ENCODE measurements at regions of chr12 and their contacts with region 1.

Region 1: DNA sequence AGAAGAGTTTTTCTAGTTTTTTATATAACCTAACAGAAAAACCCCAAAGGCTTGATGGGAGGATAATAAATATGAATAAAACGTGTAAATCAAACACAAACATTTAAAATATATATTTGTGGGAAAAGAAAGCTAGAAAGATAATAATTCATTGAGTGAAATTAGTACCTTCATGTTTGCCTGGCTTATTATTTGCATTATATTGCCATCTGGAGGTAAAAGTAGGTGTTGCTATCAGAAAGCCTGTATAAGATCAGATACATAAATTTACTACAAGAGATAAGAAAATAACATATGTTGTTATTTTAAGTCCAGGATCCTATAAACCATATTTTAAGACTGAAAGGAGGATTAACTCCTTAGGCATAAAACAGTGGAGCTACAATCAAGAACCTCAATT is 77.7 kb downstream of the NTS start:
- DNase-seq: peak; percentile 49
- ATAC-seq: no peak
- H3K4me3 ChIP-seq: no peak overlapping the region
- H3K27ac ChIP-seq: no peak overlapping the region
- H3K4me1 ChIP-seq: no peaks in the 10 kb centered on the region
- H3K27me3 ChIP-seq: no peaks in the 10 kb centered on the region
- CTCF ChIP-seq: peak; percentile 69

Region 2: GRCh38 chr12:85920324-85920947 is 31.4 kb before region 1 on chr12:
- CTCF ChIA-PET with region 1: no interaction called
- POLR2A ChIA-PET with region 1: no interaction called
- intact Hi-C with region 1: loop called (anchors 1 kb)
- DNase-seq: peak; percentile 78
- ATAC-seq: peak; percentile 55; the same call in 1 of the 2 replicates
- H3K4me3 ChIP-seq: no peak overlapping the region
- H3K27ac ChIP-seq: no peak overlapping the region
- H3K4me1 ChIP-seq: no peaks in the 10 kb centered on the region
- H3K27me3 ChIP-seq: no peaks in the 10 kb centered on the region
- CTCF ChIP-seq: peak; percentile 75

Region 3: GRCh38 chr12:86186449-86186848 is 234.6 kb after region 1 on chr12:
- CTCF ChIA-PET with region 1: no interaction called
- POLR2A ChIA-PET with region 1: no interaction called
- intact Hi-C with region 1: loop called (anchors 5 kb)
- DNase-seq: peak; percentile 34
- ATAC-seq: peak; percentile 68; the same call in 1 of the 2 replicates
- H3K4me3 ChIP-seq: no peak overlapping the region
- H3K27ac ChIP-seq: no peak overlapping the region
- H3K4me1 ChIP-seq: no peaks in the 10 kb centered on the region
- H3K27me3 ChIP-seq: no peaks in the 10 kb centered on the region
- CTCF ChIP-seq: peak; percentile 69

Region 4: DNA sequence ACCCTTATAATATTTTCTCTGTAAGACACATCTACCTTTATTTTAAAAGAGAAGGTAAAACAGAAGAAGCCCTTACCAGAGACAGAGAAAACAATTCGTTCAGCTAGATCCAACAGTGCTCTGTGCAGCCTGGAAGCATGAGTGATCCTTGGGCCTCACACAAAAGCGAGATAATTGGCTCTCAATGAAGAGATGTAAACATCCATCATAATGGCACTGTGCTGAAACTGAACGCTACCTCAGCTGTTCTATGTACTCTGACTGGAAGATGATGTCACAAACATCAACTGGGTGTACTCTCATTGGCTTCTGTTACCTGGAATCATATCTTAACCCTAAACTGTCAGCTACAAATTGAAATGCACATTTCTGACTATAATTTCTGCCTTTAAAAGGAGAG is 304.3 kb after region 1 on chr12 and contains the start of gene MGAT4C:
- CTCF ChIA-PET with region 1: no interaction called
- POLR2A ChIA-PET with region 1: no interaction called
- intact Hi-C with region 1: loop called (anchors 5 kb)
- DNase-seq: no peak
- ATAC-seq: no peak
- H3K4me3 ChIP-seq: no peak within 1 kb of the TSS
- H3K27ac ChIP-seq: no peak within 1 kb of the TSS
- H3K4me1 ChIP-seq: no peaks in the 10 kb centered on the region
- H3K27me3 ChIP-seq: no peaks in the 10 kb centered on the region; the same call in 1 of the 2 replicates
- CTCF ChIP-seq: no peak
- total RNA-seq, gene MGAT4C: not detected in 2 replicates

Region 5: DNA sequence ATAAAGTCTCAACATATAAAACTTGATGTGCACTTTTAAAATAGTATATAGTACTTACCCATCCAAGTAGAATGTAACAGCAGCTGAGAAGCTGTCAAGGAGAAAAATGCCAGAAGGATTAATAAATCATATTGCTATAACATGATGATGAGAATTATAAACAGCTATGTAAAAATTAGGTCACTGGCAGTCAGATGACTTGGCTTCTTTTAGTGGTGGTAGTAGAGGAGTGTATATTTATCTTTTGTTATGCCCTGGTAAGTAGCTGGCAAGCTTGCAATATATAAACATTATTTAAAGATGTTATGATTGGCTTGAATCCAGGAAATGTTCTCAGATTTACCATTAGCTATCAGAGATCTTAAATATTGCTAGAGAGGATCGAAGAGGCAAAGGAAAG is 775.3 kb after region 1 on chr12:
- CTCF ChIA-PET with region 1: no interaction called
- POLR2A ChIA-PET with region 1: no interaction called
- intact Hi-C with region 1: loop called (anchors 10 kb)
- DNase-seq: peak; percentile 60
- ATAC-seq: peak; percentile 84
- H3K4me3 ChIP-seq: no peak overlapping the region
- H3K27ac ChIP-seq: no peak overlapping the region
- H3K4me1 ChIP-seq: peaks cover 7% of the 10 kb centered on the region
- H3K27me3 ChIP-seq: no peaks in the 10 kb centered on the region
- CTCF ChIP-seq: no peak

Region 6: GRCh38 chr12:86914716-86915115 is 962.9 kb after region 1 on chr12:
- CTCF ChIA-PET with region 1: interaction called, 3 read pairs
- POLR2A ChIA-PET with region 1: no interaction called
- intact Hi-C with region 1: loop called (anchors 1 kb)
- DNase-seq: peak; percentile 61
- ATAC-seq: peak; percentile 77
- H3K4me3 ChIP-seq: no peak overlapping the region
- H3K27ac ChIP-seq: no peak overlapping the region
- H3K4me1 ChIP-seq: no peaks in the 10 kb centered on the region
- H3K27me3 ChIP-seq: no peaks in the 10 kb centered on the region
- CTCF ChIP-seq: peak; percentile 76

Measured in PC-3 (cell line).